HCT116 (cell line): ENCODE measurements at regions of chr15 and their contacts with region 1.

Region 1: GRCh38 chr15:72155635-72156616 is 37.7 kb downstream of the SENP8 start:
- DNase-seq: peak; percentile 59
- ATAC-seq: peak; percentile 99
- H3K4me3 ChIP-seq: no peak overlapping the region
- H3K27ac ChIP-seq: no peak overlapping the region
- H3K4me1 ChIP-seq: peaks cover 4 to 12% of the 10 kb centered on the region in 2 experiments; a peak in 3 of 4 replicates
- H3K27me3 ChIP-seq: no peaks in the 10 kb centered on the region
- CTCF ChIP-seq: peak; percentile 74 to 92 (median 84); a peak in 5 of 6 replicates
- POLR2A ChIP-seq: no peak
- RAD21 ChIP-seq: peak; percentile 95

Region 2: DNA sequence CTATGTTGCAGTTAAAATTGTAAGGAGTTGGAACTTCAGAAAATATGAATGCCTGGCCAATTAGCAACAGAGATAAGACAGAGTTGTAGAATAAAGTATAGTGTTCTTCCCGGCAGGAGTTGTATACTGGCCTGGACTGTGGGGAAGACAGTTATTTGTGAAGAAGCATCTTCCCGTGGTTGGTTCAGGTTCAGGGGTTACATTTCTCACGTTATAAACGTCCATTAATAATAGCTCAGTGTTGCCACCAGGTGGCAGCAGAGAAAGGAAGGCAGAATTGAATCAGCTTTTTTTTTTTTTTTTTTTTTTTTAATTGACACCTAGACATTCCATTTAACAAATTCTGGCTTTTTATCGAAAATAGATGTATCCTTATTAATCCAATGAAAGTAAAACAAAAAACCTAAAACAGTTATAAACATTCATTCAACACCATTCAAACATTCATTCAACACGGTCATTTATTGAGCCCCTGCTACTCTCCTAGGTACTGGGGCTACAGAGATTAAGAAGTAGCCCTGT is 412.0 kb before region 1 on chr15:
- CTCF ChIA-PET with region 1: interaction called, 20 read pairs
- POLR2A ChIA-PET with region 1: no interaction called
- RAD21 ChIA-PET with region 1: interaction called in 1 of 2 experiments, 8 read pairs
- intact Hi-C with region 1: loop called (anchors 2 kb)
- DNase-seq: no peak
- ATAC-seq: no peak
- H3K4me3 ChIP-seq: no peak overlapping the region
- H3K27ac ChIP-seq: no peak overlapping the region
- H3K4me1 ChIP-seq: peaks cover 27 to 33% of the 10 kb centered on the region in 2 experiments
- H3K27me3 ChIP-seq: no peaks in the 10 kb centered on the region
- CTCF ChIP-seq: peak; percentile 57 to 78 (median 64); a peak in 5 of 6 replicates
- POLR2A ChIP-seq: no peak
- RAD21 ChIP-seq: peak; percentile 71